Panc1 (cell line): ENCODE measurements at regions of chr6 and their contacts with region 1.

Region 1: DNA sequence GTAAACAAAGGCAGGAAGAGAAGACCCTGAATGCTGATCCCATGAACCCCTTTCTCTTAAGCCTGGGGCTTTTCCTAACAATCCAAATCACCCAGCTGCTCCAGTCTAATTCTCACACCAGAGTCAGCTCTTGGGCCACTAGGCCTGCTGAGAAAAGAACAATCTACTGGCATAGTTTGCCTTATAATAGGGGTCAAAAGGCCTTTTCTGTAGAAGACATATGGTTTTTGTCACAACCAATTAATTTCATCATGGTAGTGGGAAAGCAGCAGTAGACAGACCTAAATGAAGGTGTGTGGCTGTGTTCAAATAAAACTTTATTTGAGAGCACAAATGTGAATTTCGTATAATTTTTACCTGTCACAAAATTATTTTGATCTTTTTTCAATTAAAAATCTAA is 994.7 kb upstream of the EPHA7 start:
- DNase-seq: no peak
- ATAC-seq: no peak
- H3K4me3 ChIP-seq: no peak overlapping the region
- H3K27ac ChIP-seq: no peak overlapping the region
- H3K4me1 ChIP-seq: no peaks in the 10 kb centered on the region
- H3K27me3 ChIP-seq: no peaks in the 10 kb centered on the region
- CTCF ChIP-seq: no peak

Region 2: GRCh38 chr6:94623586-94623985 is 209.5 kb after region 1 on chr6:
- CTCF ChIA-PET with region 1: no interaction called
- POLR2A ChIA-PET with region 1: interaction called, 10 read pairs
- in situ Hi-C with region 1: no loop called
- intact Hi-C with region 1: no loop called
- DNase-seq: no peak
- ATAC-seq: no peak
- H3K4me3 ChIP-seq: no peak overlapping the region
- H3K27ac ChIP-seq: no peak overlapping the region
- H3K4me1 ChIP-seq: no peaks in the 10 kb centered on the region
- H3K27me3 ChIP-seq: no peaks in the 10 kb centered on the region
- CTCF ChIP-seq: no peak